MCF 10A (cell line): ENCODE measurements at regions of chr4 and their contacts with region 1.

Region 1: DNA sequence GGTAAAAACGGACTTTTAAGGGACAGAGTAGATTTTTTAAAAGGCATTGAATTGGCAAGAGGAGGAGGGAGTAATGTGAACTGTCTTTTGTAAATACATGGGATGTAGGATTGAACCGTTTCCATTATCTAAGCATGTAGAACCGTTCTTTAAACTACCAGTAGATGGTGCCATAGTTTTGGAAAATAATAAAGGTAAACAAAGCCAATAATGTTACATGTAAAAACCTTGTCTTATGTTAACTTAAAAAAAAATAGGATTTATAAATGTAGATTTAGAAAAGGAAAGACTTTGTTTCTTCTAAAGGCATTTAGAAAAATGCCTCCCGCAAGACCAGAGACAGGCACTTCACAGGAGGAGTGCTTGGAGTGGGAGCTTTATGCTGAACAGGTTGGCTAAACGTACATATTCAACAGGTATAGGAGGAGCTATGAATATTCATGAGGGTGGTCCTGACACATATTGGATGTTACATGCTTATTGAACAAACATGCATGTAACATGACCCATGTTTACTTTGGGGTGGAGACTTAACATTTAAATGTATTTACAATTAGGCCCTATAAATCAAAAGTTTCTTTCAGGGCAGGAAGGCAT is 45.5 kb upstream of the FAM241A start:
- DNase-seq: peak; percentile 66
- H3K4me3 Mint-ChIP-seq: no peak overlapping the region
- H3K27ac Mint-ChIP-seq: peak overlapping the region; percentile 47
- H3K4me1 Mint-ChIP-seq: peaks cover 7% of the 10 kb centered on the region
- H3K27me3 Mint-ChIP-seq: no peaks in the 10 kb centered on the region
- CTCF ChIP-seq: peak; percentile 64

Region 2: GRCh38 chr4:112145326-112145819 is 45.6 kb after region 1 on chr4 and contains the start of gene FAM241A:
- CTCF ChIA-PET with region 1: interaction called, 11 read pairs
- POLR2A ChIA-PET with region 1: interaction called, 3 read pairs
- intact Hi-C with region 1: loop called (anchors 2 kb)
- DNase-seq: peak; percentile 83
- H3K4me3 Mint-ChIP-seq: peak within 1 kb of the TSS; percentile 79
- H3K27ac Mint-ChIP-seq: peak within 1 kb of the TSS; percentile 63
- H3K4me1 Mint-ChIP-seq: peaks cover 16% of the 10 kb centered on the region
- H3K27me3 Mint-ChIP-seq: no peaks in the 10 kb centered on the region
- CTCF ChIP-seq: no peak
- total RNA-seq, gene FAM241A: 8.2 and 10.9 TPM in 2 replicates

Region 3: GRCh38 chr4:112189754-112190153 is 90.0 kb after region 1 on chr4:
- CTCF ChIA-PET with region 1: interaction called, 40 read pairs
- POLR2A ChIA-PET with region 1: no interaction called
- intact Hi-C with region 1: loop called (anchors 1 kb)
- DNase-seq: no peak
- H3K4me3 Mint-ChIP-seq: no peak overlapping the region
- H3K27ac Mint-ChIP-seq: no peak overlapping the region
- H3K4me1 Mint-ChIP-seq: no peaks in the 10 kb centered on the region
- H3K27me3 Mint-ChIP-seq: no peaks in the 10 kb centered on the region
- CTCF ChIP-seq: peak; percentile 6

Region 4: DNA sequence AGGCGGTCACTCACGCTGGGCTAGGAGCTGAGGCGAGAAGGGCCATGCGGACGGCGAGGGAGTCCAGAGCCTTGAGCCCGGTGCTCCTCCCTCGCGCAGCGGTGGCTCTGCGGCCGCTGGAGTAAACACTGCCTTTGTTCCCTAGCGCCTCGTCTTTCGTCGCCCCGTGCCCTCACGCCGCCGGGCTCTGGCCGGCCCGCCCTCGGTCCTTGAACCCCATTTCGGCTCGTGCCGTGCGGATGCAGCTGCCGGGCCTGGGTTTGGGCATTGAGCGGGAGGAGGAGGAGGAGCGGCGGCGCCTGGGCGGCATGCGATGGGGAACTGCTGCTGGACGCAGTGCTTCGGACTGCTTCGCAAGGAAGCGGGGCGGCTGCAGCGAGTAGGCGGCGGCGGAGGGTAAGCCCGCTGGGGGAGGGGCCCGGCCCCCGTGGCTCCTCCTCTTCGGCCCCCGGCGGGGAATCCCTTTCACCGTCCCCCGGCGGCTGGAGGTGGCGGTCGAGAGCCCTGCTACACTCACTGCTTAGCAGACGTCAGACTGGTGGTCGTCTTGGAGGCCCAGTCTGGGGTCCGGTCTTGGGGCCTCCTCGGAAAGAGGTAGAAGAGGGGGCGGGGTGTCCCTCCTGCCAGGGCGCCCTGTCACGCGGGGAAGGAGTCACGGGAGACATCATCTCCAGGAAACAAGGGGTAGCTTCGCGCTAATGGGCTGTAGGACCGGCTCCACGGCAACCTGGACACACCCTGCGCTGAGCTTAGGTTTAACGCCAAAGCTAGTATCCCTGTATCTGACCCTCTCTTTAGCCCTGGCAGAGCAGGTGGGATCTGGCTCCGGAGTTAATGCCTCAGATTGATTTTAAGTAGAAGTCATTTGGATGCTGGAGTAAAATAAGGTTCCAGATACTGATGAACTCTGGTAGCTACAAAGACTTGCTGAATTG is 132.2 kb after region 1 on chr4 and contains the start of gene AP1AR:
- CTCF ChIA-PET with region 1: interaction called, 206 read pairs
- POLR2A ChIA-PET with region 1: interaction called, 22 read pairs
- intact Hi-C with region 1: loop called (anchors 1 kb)
- DNase-seq: peak; percentile 77
- H3K4me3 Mint-ChIP-seq: peak within 1 kb of the TSS; percentile 99
- H3K27ac Mint-ChIP-seq: peak within 1 kb of the TSS; percentile 98
- H3K4me1 Mint-ChIP-seq: peaks cover 15% of the 10 kb centered on the region
- H3K27me3 Mint-ChIP-seq: no peaks in the 10 kb centered on the region
- CTCF ChIP-seq: peak; percentile 9
- total RNA-seq, gene AP1AR: 38.4 and 39.7 TPM in 2 replicates

Region 5: DNA sequence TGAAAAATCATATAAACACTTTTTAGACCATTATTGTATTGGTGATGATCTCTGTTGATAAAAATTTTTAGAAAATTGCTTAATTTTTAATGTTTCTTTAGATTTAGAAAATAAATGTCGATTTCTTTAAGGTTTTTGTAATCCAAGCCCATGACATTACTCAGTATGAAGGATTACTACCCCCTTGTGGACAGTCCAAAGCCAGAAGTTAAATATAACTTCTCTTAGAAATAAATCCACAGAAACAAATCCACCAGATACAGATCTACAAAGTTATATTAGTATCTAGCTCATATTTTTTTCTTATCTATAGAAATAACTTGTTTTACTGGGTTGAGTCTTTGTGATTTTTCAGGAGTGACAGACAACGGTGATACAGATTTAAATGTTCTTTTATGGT is 167.0 kb after region 1 on chr4:
- CTCF ChIA-PET with region 1: interaction called, 8 read pairs
- POLR2A ChIA-PET with region 1: interaction called, 4 read pairs
- intact Hi-C with region 1: loop called (anchors 1 kb)
- DNase-seq: peak; percentile 33
- H3K4me3 Mint-ChIP-seq: no peak overlapping the region
- H3K27ac Mint-ChIP-seq: no peak overlapping the region
- H3K4me1 Mint-ChIP-seq: peaks cover 14% of the 10 kb centered on the region
- H3K27me3 Mint-ChIP-seq: no peaks in the 10 kb centered on the region
- CTCF ChIP-seq: peak; percentile 31

Region 6: DNA sequence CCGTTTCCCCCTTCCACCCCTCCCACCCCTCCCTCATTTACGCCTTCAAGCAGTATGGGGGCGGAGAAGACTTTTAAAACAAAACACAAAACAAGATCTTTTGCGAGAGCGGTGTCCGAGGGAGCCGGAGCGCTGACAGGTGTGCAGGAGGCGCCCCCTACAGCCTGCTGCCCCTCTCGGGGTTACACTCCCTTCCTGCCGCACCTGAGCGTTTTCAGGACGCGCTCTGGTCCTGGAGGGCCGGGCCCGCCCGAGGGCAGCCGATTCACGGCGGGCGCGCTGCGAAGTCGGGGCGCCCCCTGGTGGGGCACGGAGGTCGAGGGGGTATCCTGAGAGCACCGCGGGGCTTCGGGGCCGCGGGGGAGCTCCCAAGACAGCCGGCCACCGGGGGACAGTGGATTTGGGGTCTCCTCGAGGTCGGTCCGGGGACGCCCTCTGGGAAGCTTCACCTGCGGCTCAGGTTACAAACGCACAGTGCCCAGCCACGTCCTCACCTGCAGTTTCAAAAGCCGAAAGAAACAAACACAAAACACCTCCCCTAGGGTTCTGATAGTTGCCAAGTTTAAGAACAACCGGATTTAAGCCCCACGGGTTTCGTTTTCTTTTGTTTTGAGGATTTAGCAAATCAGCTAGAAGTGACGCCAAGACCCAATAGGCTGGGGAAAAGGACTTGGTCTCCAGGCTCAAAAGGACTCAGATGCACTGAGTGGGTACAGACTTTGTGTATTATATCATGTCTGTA is 424.1 kb after region 1 on chr4:
- CTCF ChIA-PET with region 1: interaction called, 8 read pairs
- POLR2A ChIA-PET with region 1: no interaction called
- intact Hi-C with region 1: loop called (anchors 2 kb)
- DNase-seq: peak; percentile 62
- H3K4me3 Mint-ChIP-seq: peak overlapping the region; percentile 69
- H3K27ac Mint-ChIP-seq: no peak overlapping the region
- H3K4me1 Mint-ChIP-seq: no peaks in the 10 kb centered on the region
- H3K27me3 Mint-ChIP-seq: peaks cover 20% of the 10 kb centered on the region
- CTCF ChIP-seq: peak; percentile 87

Region 7: GRCh38 chr4:113534711-113535110 is 1434.9 kb after region 1 on chr4:
- CTCF ChIA-PET with region 1: no interaction called
- POLR2A ChIA-PET with region 1: no interaction called
- intact Hi-C with region 1: no loop called
- DNase-seq: no peak
- H3K4me3 Mint-ChIP-seq: no peak overlapping the region
- H3K27ac Mint-ChIP-seq: peak overlapping the region; percentile 59
- H3K4me1 Mint-ChIP-seq: peaks cover 27% of the 10 kb centered on the region
- H3K27me3 Mint-ChIP-seq: no peaks in the 10 kb centered on the region
- CTCF ChIP-seq: no peak